Activated B cell treated with CpG ODN at 0.5 μM for 24 hours (primary cell): ENCODE measurements at regions of chr10 and their contacts with region 1.

Region 1: GRCh38 chr10:11318826-11319599 is 292.4 kb downstream of the USP6NL start:
- DNase-seq: no peak
- ATAC-seq: no peak
- H3K4me3 Mint-ChIP-seq: no peak overlapping the region
- H3K27ac Mint-ChIP-seq: no peak overlapping the region
- H3K4me1 Mint-ChIP-seq: no peaks in the 10 kb centered on the region
- H3K27me3 Mint-ChIP-seq: no peaks in the 10 kb centered on the region
- CTCF ChIP-seq: no peak

Region 2: DNA sequence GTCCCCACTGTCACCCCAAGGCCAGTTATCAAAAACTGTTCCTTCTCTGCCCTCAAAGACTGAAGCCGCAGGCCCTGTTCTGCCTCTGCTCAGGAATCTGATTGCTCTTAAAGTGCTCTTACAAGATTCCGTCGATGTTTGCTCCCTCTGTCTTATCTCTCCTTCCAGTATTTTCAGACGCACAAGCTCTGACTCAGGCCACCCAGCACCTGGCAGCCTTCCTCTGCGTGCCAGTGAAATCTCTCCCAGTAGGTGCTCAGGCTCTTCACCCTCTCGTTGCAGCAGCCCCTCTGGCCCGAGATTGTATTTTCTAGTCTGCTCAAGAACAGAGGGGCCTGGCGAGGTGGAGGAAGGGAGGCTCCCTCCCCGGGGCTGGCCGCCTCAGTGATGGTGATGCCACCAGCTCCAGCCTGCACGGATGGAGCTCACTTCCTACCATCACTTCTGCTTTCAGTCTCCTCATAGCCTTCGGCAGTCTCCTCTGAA is 16.2 kb after region 1 on chr10:
- CTCF ChIA-PET with region 1: no interaction called
- POLR2A ChIA-PET with region 1: interaction called, 4 read pairs
- intact Hi-C with region 1: loop called (anchors 2 kb)
- DNase-seq: no peak
- ATAC-seq: peak; percentile 88
- H3K4me3 Mint-ChIP-seq: peak overlapping the region; percentile 50
- H3K27ac Mint-ChIP-seq: peak overlapping the region; percentile 90
- H3K4me1 Mint-ChIP-seq: peaks cover 33% of the 10 kb centered on the region
- H3K27me3 Mint-ChIP-seq: no peaks in the 10 kb centered on the region
- CTCF ChIP-seq: no peak